ENCODE measurements at regions of chr20 and their contacts with region 1.

Region 1: GRCh38 chr20:56554869-56555268 is 21.8 kb downstream of the FAM209B start:
- DNase-seq: peak; percentile 23
- H3K4me3 Mint-ChIP-seq: no peak overlapping the region
- H3K27ac Mint-ChIP-seq: no peak overlapping the region
- H3K4me1 Mint-ChIP-seq: peaks cover 7% of the 10 kb centered on the region
- H3K27me3 Mint-ChIP-seq: no peaks in the 10 kb centered on the region

Region 2: DNA sequence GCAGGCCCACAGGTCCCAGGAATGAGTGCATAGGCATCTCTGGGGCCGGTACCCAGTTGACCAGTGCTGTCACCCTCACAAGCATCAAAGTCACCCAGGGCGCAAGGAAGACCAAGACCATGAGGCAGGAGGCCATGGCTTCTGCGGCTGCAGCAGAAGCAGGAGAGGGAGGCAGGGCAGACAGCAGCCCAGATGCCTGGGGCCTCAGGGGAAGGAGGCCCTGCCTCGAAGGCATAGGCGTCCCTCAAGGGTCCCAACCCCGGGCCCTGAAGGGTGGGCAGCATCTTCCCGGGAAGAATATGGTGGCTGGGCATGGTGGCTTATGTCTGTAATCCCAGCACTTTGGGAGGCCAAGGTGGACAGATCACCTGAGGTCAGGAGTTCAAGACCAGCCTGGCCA is 27.3 kb before region 1 on chr20:
- CTCF ChIA-PET with region 1: no interaction called
- POLR2A ChIA-PET with region 1: no interaction called
- intact Hi-C with region 1: no loop called
- DNase-seq: no peak
- H3K4me3 Mint-ChIP-seq: no peak overlapping the region
- H3K27ac Mint-ChIP-seq: no peak overlapping the region
- H3K4me1 Mint-ChIP-seq: peaks cover 3% of the 10 kb centered on the region
- H3K27me3 Mint-ChIP-seq: no peaks in the 10 kb centered on the region

Region 3: GRCh38 chr20:56566271-56566981 is 11.6 kb after region 1 on chr20:
- CTCF ChIA-PET with region 1: interaction called, 10 read pairs
- POLR2A ChIA-PET with region 1: no interaction called
- intact Hi-C with region 1: no loop called
- DNase-seq: no peak
- H3K4me3 Mint-ChIP-seq: no peak overlapping the region
- H3K27ac Mint-ChIP-seq: no peak overlapping the region
- H3K4me1 Mint-ChIP-seq: no peaks in the 10 kb centered on the region
- H3K27me3 Mint-ChIP-seq: peaks cover 4% of the 10 kb centered on the region

Region 4: DNA sequence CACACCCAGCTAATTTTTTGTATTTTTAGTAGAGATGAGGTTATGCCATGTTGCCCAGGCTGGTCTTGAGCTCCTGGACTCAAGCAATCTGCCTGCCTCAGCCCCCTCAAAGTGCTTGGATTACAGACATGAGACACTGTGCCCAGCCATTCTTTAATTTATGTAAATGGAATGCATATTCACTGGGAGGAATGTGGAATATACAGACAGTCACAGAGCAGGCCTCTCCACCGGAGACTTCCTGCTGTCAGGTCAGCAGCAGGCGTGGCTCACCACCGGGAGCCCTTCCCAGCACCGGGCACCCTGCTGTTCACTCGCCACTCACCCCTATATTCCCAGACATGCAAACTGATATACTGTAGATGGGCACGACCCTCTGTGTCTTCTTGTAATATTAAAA is 157.3 kb after region 1 on chr20:
- CTCF ChIA-PET with region 1: no interaction called
- POLR2A ChIA-PET with region 1: no interaction called
- intact Hi-C with region 1: no loop called
- DNase-seq: no peak
- H3K4me3 Mint-ChIP-seq: no peak overlapping the region
- H3K27ac Mint-ChIP-seq: no peak overlapping the region
- H3K4me1 Mint-ChIP-seq: no peaks in the 10 kb centered on the region
- H3K27me3 Mint-ChIP-seq: peaks cover 10% of the 10 kb centered on the region

Region 5: DNA sequence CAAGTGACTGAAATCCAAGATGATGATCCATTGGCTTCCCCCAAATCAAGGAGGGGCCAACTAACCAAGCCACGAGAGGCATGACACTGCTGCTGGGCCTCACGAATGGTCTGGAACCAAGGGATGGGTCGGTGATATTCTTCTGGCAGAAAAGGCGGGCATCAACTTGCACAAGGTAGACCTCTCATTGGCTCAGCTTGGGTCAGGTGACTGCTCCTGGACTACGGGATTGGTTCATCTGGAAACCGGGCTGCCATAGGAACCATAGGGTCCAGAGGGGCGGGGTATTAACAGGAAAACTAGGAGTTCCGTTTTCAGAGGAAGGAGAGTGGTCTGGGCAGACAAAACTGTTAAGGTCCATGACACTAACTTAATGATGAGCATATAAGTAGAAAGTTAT is 175.1 kb after region 1 on chr20:
- CTCF ChIA-PET with region 1: no interaction called
- POLR2A ChIA-PET with region 1: no interaction called
- intact Hi-C with region 1: no loop called
- DNase-seq: no peak
- H3K4me3 Mint-ChIP-seq: no peak overlapping the region
- H3K27ac Mint-ChIP-seq: no peak overlapping the region
- H3K4me1 Mint-ChIP-seq: no peaks in the 10 kb centered on the region
- H3K27me3 Mint-ChIP-seq: peaks cover 4% of the 10 kb centered on the region

Region 6: GRCh38 chr20:56974499-56975236 is 419.8 kb after region 1 on chr20:
- CTCF ChIA-PET with region 1: interaction called, 14 read pairs
- POLR2A ChIA-PET with region 1: no interaction called
- intact Hi-C with region 1: loop called (anchors 1 kb)
- DNase-seq: peak; percentile 23
- H3K4me3 Mint-ChIP-seq: no peak overlapping the region
- H3K27ac Mint-ChIP-seq: no peak overlapping the region
- H3K4me1 Mint-ChIP-seq: no peaks in the 10 kb centered on the region
- H3K27me3 Mint-ChIP-seq: peaks cover 21% of the 10 kb centered on the region

Region 7: DNA sequence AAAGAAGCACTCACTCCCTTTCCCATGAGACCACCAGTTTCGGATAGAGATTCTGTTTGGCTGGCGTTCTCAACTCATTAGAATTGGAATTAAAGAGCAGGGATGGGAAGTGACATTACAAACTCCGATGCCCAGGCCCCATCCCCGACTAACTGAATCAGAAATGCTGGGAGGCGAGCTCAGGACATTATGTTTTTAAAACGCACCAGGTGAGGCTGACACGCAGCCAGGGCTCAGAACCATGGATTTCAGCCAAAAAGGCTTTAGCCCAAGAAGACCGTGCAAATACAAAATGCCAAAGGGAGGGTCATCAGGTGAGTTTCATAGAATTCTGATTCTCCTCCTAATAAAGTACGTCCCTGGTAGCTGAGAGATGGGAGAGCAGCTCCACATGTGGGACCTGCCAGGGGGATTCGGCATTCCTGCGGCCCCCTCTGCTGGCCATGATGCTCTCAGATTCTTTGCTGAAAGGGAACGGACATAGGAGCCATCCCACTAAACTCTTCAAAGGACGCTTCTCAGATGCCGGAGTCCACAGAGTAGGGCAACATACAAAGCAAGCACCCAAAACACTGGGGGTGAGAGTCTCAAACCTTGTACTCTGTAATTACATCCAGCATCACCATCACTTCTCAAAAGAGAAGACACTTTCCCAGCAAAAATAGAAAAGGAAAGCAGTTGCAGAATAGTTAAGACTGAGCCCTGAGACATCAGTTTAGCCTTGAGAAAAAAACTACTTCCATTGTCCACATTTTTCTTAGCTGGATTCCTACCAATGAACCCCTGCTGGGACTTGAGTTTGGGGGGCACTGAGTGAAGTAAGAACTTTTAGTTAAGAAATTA is 506.4 kb after region 1 on chr20:
- CTCF ChIA-PET with region 1: interaction called, 3 read pairs
- POLR2A ChIA-PET with region 1: no interaction called
- intact Hi-C with region 1: loop called (anchors 10 kb)
- DNase-seq: no peak
- H3K4me3 Mint-ChIP-seq: no peak overlapping the region
- H3K27ac Mint-ChIP-seq: no peak overlapping the region
- H3K4me1 Mint-ChIP-seq: peaks cover 12% of the 10 kb centered on the region
- H3K27me3 Mint-ChIP-seq: peaks cover 33% of the 10 kb centered on the region

Measured in activated CD4-positive, alpha-beta memory T cell treated with anti-CD3 and anti-CD28 coated beads for 36 hours (primary cell).